Calu3 (cell line): ENCODE measurements at regions of chr11 and their contacts with region 1.

Region 1: GRCh38 chr11:11798586-11799438 is 43.0 kb upstream of the USP47 start:
- DNase-seq: peak; percentile 89
- H3K4me3 Mint-ChIP-seq: no peak overlapping the region
- H3K27ac Mint-ChIP-seq: no peak overlapping the region
- H3K4me1 Mint-ChIP-seq: no peaks in the 10 kb centered on the region
- H3K27me3 Mint-ChIP-seq: peaks cover 27% of the 10 kb centered on the region
- CTCF ChIP-seq: peak; percentile 85

Region 2: GRCh38 chr11:11265994-11266606 is 532.7 kb before region 1 on chr11:
- CTCF ChIA-PET with region 1: no interaction called
- intact Hi-C with region 1: no loop called
- DNase-seq: peak; percentile 75
- H3K4me3 Mint-ChIP-seq: no peak overlapping the region
- H3K27ac Mint-ChIP-seq: no peak overlapping the region
- H3K4me1 Mint-ChIP-seq: peaks cover 24% of the 10 kb centered on the region
- H3K27me3 Mint-ChIP-seq: peaks cover 13% of the 10 kb centered on the region
- CTCF ChIP-seq: peak; percentile 81

Region 3: DNA sequence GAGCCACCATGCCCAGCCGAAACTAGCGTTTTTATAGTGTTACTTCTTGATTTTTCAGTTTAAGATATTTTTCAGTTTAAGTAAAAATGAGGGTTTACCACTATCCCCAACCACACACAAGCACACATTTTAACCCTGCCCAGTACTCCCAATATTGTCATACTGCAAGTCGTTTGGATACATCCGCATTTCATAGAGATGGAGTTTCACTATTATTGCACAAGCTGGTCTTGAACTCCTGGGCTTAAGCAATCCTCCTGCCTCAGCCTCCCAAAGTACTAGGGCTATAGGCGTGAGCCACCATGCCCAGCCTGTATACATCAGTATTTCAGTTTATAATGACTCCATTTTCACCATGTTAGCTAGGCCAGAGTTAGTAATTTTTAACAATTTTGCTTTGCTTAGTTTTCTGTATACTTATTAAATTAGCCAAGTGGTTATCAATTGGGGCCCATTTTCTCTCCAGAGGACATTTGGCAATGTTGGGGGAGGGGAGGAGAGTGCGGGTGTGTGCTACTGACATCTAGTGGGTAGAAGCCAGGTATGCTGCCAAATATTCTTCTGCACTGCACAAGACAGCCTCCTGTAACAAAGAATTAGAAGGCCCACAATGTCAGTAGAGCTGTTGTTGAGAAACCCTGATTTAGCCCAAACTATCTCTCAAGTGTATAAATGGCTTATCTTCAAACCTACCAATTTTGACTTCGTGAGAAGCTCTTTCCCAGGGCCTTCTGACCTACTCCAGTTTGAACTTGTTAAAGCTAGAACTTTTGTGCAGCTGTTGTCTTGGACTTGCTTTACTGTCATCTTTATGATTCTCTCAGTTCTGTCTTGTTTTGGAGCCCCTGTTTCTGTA is 50.3 kb after region 1 on chr11:
- CTCF ChIA-PET with region 1: interaction called, 3 read pairs
- intact Hi-C with region 1: loop called (anchors 1 kb)
- DNase-seq: peak; percentile 77
- H3K4me3 Mint-ChIP-seq: no peak overlapping the region
- H3K27ac Mint-ChIP-seq: no peak overlapping the region
- H3K4me1 Mint-ChIP-seq: peaks cover 27% of the 10 kb centered on the region
- H3K27me3 Mint-ChIP-seq: no peaks in the 10 kb centered on the region
- CTCF ChIP-seq: peak; percentile 60

Region 4: GRCh38 chr11:11895672-11896071 is 96.9 kb after region 1 on chr11:
- CTCF ChIA-PET with region 1: interaction called, 3 read pairs
- intact Hi-C with region 1: loop called (anchors 1 kb)
- DNase-seq: no peak
- H3K4me3 Mint-ChIP-seq: no peak overlapping the region
- H3K27ac Mint-ChIP-seq: no peak overlapping the region
- H3K4me1 Mint-ChIP-seq: peaks cover 6% of the 10 kb centered on the region
- H3K27me3 Mint-ChIP-seq: no peaks in the 10 kb centered on the region
- CTCF ChIP-seq: peak; percentile 1

Region 5: DNA sequence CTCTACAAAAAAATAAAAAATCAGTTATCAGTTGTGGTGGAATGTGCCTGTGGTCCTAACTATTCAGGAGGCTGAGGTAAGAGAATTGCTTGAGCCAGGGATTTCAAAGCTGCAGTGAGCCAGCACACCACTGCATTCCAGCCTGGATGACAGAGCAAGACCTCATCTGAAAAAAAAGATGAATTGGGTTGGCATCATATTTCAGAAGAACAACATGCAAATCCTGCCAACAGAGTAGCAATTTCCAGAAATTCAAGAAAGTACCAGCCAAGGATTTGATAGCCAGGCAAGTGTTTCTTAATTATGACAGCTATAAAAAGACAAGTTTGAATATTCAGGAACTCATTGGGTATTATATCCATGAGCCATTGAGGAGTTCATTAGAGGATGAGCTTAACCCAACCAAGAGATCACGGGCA is 118.2 kb after region 1 on chr11:
- CTCF ChIA-PET with region 1: no interaction called
- intact Hi-C with region 1: no loop called
- DNase-seq: no peak
- H3K4me3 Mint-ChIP-seq: no peak overlapping the region
- H3K27ac Mint-ChIP-seq: peak overlapping the region; percentile 34
- H3K4me1 Mint-ChIP-seq: peaks cover 12% of the 10 kb centered on the region
- H3K27me3 Mint-ChIP-seq: no peaks in the 10 kb centered on the region
- CTCF ChIP-seq: no peak